ENCODE measurements at regions of chr11 and their contacts with region 1.

Region 1: DNA sequence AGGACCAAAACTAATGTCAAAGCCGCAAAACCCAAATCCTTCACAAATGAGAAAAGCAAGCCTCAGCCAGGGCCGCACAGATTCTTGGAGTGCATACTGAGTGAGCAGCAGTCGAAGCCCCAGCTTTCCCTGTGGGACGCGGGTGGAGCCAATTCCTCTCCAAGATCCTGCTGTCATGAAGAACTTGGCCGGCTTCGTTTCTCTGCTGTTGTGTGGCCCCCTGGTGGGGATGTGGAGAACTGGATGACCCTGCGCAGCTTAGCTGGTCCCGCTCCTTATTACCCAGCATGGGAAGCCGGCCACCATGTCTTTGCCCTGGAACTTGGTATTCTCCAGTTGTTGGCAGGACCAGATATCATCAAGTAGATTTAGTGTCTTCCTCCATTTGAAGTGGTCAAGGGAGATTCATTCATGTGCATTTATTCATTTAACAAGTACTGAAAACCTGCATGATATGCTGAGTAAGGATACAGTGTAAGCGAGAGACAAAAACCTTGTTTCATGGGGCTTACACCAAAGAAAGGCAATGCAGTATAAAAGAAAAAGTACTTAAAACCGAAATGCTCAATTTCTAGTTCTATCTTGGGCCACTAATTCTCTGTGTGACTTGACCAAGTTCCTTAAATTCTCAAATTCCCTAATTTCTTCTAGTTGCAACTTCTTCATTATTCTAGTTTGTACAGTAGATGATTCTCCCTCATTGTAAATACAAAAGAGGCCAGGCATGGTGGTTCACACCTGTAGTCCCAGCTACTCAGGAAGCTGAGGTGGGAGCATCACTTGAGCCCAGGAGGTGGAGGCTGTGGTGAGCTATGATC is 56.7 kb upstream of the CRTAM start:
- DNase-seq: peak; percentile 52 to 85 (median 71)
- ATAC-seq: peak; percentile 80
- H3K4me3 ChIP-seq: no peak overlapping the region
- H3K4me3 Mint-ChIP-seq: no peak overlapping the region
- H3K27ac ChIP-seq: no peak overlapping the region
- H3K27ac Mint-ChIP-seq: no peak overlapping the region
- H3K4me1 ChIP-seq: no peaks in the 10 kb centered on the region
- H3K4me1 Mint-ChIP-seq: peaks cover 12% of the 10 kb centered on the region
- H3K27me3 ChIP-seq: no peaks in the 10 kb centered on the region
- H3K27me3 Mint-ChIP-seq: no peaks in the 10 kb centered on the region
- CTCF ChIP-seq: peak; percentile 91

Region 2: GRCh38 chr11:122578168-122578825 is 203.3 kb before region 1 on chr11:
- CTCF ChIA-PET with region 1: interaction called, 8 read pairs
- POLR2A ChIA-PET with region 1: interaction called, 3 read pairs
- intact Hi-C with region 1: loop called (anchors 1 kb)
- DNase-seq: no peak
- ATAC-seq: no peak
- H3K4me3 ChIP-seq: no peak overlapping the region
- H3K4me3 Mint-ChIP-seq: no peak overlapping the region
- H3K27ac ChIP-seq: no peak overlapping the region
- H3K27ac Mint-ChIP-seq: no peak overlapping the region
- H3K4me1 ChIP-seq: peaks cover 8% of the 10 kb centered on the region
- H3K4me1 Mint-ChIP-seq: peaks cover 7% of the 10 kb centered on the region
- H3K27me3 ChIP-seq: no peaks in the 10 kb centered on the region
- H3K27me3 Mint-ChIP-seq: peaks cover 8% of the 10 kb centered on the region
- CTCF ChIP-seq: no peak

Region 3: DNA sequence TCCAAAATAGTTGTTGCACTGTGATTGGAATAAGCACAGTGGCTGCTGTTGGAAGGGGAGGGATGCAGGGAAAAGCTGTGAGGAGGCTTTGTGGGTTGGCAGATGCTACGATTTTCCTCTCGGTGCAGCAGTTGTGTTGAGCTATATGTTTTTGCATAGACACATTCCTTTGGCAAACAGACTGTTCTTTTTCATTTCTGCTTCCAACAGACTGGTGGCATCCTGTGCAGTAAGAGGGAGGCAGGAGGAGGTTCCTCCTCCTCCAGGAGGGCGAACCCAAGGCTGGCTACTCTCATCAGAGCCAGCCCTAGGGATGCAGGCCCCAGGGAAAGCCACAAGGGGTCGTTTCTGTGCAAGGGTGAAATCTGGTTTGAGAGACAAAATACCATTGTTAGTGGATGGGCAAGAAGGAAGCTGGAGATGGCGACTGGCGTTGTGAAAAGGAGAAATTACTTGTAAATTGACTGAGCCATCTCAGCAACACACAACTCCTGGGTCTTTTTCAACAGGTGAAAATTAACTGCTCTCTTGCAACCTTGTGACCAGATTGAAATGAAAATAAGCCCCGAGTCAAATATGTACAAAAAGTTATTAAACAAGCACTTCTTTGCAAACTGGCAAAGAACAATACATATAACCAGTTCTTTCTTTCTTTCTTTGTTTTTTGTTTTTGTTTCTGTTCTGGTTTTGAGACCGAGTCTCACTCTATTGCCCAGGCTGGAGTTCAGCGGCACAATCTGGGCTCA is 152.6 kb before region 1 on chr11:
- CTCF ChIA-PET with region 1: interaction called, 13 read pairs
- POLR2A ChIA-PET with region 1: interaction called, 3 read pairs
- intact Hi-C with region 1: loop called (anchors 1 kb)
- DNase-seq: peak; percentile 40 to 81 (median 64)
- ATAC-seq: peak; percentile 80
- H3K4me3 ChIP-seq: no peak overlapping the region
- H3K4me3 Mint-ChIP-seq: no peak overlapping the region
- H3K27ac ChIP-seq: no peak overlapping the region
- H3K27ac Mint-ChIP-seq: no peak overlapping the region
- H3K4me1 ChIP-seq: no peaks in the 10 kb centered on the region
- H3K4me1 Mint-ChIP-seq: peaks cover 14% of the 10 kb centered on the region
- H3K27me3 ChIP-seq: no peaks in the 10 kb centered on the region
- H3K27me3 Mint-ChIP-seq: no peaks in the 10 kb centered on the region
- CTCF ChIP-seq: peak; percentile 65

Region 4: GRCh38 chr11:122634497-122634896 is 147.1 kb before region 1 on chr11:
- CTCF ChIA-PET with region 1: interaction called, 13 read pairs
- POLR2A ChIA-PET with region 1: interaction called, 3 read pairs
- intact Hi-C with region 1: loop called (anchors 1 kb)
- DNase-seq: no peak
- ATAC-seq: no peak
- H3K4me3 ChIP-seq: no peak overlapping the region
- H3K4me3 Mint-ChIP-seq: no peak overlapping the region
- H3K27ac ChIP-seq: no peak overlapping the region
- H3K27ac Mint-ChIP-seq: no peak overlapping the region
- H3K4me1 ChIP-seq: peaks cover 4% of the 10 kb centered on the region
- H3K4me1 Mint-ChIP-seq: peaks cover 15% of the 10 kb centered on the region
- H3K27me3 ChIP-seq: no peaks in the 10 kb centered on the region
- H3K27me3 Mint-ChIP-seq: no peaks in the 10 kb centered on the region
- CTCF ChIP-seq: no peak

Region 5: GRCh38 chr11:122763108-122763507 is 18.5 kb before region 1 on chr11:
- CTCF ChIA-PET with region 1: no interaction called
- POLR2A ChIA-PET with region 1: interaction called, 3 read pairs
- intact Hi-C with region 1: loop called in 1 of 2 experiments (anchors 2 kb)
- DNase-seq: no peak
- ATAC-seq: no peak
- H3K4me3 ChIP-seq: no peak overlapping the region
- H3K4me3 Mint-ChIP-seq: no peak overlapping the region
- H3K27ac ChIP-seq: no peak overlapping the region
- H3K27ac Mint-ChIP-seq: no peak overlapping the region
- H3K4me1 ChIP-seq: no peaks in the 10 kb centered on the region
- H3K4me1 Mint-ChIP-seq: peaks cover 24% of the 10 kb centered on the region
- H3K27me3 ChIP-seq: no peaks in the 10 kb centered on the region
- H3K27me3 Mint-ChIP-seq: no peaks in the 10 kb centered on the region
- CTCF ChIP-seq: no peak

Region 6: DNA sequence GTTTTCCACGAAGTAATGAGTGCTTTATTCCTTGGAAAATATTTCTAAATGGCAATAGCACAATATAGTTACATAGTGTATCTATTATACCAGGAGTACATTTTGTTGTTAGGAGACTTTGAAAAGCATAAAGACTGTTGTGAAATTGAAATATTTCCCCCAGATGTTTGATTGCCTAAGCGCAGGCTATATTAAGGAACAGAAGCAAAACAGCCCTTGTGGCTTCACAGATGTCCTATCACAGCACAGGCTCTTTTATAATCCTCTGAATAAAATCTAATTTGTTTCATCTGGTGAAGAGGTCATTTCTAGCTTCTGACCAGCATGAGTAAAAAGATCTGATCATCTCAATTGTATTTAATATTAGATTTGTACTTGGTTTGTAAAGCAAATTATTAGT is 151.8 kb after region 1 on chr11:
- CTCF ChIA-PET with region 1: no interaction called
- POLR2A ChIA-PET with region 1: no interaction called
- intact Hi-C with region 1: no loop called
- DNase-seq: no peak
- ATAC-seq: no peak
- H3K4me3 ChIP-seq: no peak overlapping the region
- H3K4me3 Mint-ChIP-seq: no peak overlapping the region
- H3K27ac ChIP-seq: no peak overlapping the region
- H3K27ac Mint-ChIP-seq: no peak overlapping the region
- H3K4me1 ChIP-seq: no peaks in the 10 kb centered on the region
- H3K4me1 Mint-ChIP-seq: no peaks in the 10 kb centered on the region
- H3K27me3 ChIP-seq: no peaks in the 10 kb centered on the region
- H3K27me3 Mint-ChIP-seq: no peaks in the 10 kb centered on the region
- CTCF ChIP-seq: no peak

Measured in CD4-positive, alpha-beta T cell (primary cell).